Psoas muscle (tissue), 8 donors: ENCODE measurements at regions of chr3 and their contacts with region 1.

Region 1: GRCh38 chr3:157030712-157031111 is 129.2 kb downstream of the CCNL1 start:
- DNase-seq: no peak
- ATAC-seq: no peak
- H3K4me3 ChIP-seq: no peak overlapping the region
- H3K27ac ChIP-seq: no peak overlapping the region
- H3K4me1 ChIP-seq: no peaks in the 10 kb centered on the region
- H3K27me3 ChIP-seq: no peaks in the 10 kb centered on the region
- CTCF ChIP-seq: no peak

Region 2: DNA sequence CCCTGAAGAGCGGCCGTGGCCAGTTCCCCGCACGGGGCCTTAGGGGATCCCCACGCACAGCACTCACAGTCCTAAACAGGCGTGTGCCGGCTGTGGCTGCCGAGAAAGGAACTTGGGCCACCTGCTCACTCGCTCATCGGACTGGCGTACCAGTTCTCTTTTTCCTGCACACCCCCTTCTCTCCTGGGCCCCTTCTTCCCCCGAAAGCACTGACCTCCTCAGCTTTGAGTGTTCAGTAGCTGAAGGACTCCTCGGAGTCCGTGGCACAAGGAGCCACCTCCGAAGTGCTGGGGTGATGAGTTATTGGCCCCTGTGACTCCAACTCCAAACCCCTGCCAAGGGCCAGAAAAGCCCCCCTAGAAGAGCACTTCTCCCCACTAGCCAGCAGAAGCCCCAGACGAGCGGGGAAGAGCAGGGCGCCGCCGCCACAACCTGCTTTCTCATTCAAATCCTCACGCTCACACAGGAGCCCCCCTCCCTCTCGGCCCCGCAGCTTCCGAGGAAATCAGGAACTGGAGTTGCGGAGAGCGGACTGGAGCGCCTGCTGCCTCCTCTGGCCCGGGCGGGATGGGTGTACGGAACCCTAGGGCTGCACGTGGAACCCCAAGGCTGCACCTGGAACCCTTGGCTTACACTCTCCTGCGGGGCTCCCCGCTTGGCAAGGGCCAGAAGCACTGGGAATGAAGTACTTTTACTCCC is 1285.9 kb before region 1 on chr3 and contains the start of gene PLCH1:
- intact Hi-C with region 1: loop called in 1 of 2 experiments (anchors 10 kb)
- DNase-seq: peak; percentile 51 to 70
- ATAC-seq: peak; percentile 56 to 86 (median 80)
- H3K4me3 ChIP-seq: peak within 1 kb of the TSS; percentile 80
- H3K27ac ChIP-seq: no peak within 1 kb of the TSS
- H3K4me1 ChIP-seq: peaks cover 6% of the 10 kb centered on the region
- H3K27me3 ChIP-seq: peaks cover 3 to 37% (median 3%) of the 10 kb centered on the region in 3 donors
- CTCF ChIP-seq: no peak
- total RNA-seq, gene PLCH1: 0.05 to 1.1 (median 0.62) TPM in 3 of 4 donors, not detected in the other

Region 3: DNA sequence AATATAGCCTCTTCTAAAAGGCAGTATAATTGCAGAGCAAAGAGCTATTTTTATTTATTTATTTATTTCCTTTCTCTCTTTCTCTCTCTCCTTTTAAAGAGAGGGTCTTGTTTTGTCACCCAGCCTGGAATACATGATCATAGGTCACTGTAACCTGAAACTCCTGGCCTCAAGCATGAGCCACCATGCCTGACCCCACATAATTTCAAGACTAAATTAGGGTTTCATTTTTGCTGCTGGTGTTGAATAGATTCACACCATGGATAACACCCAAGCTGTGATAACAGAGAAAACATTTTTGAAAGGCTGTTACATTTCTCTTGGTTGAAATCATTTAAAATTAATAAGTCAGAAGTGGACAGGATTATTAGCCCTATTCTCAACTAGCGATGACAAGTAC is 73.0 kb before region 1 on chr3:
- intact Hi-C with region 1: no loop called
- DNase-seq: no peak
- ATAC-seq: no peak
- H3K4me3 ChIP-seq: no peak overlapping the region
- H3K27ac ChIP-seq: no peak overlapping the region
- H3K4me1 ChIP-seq: no peaks in the 10 kb centered on the region
- H3K27me3 ChIP-seq: no peaks in the 10 kb centered on the region
- CTCF ChIP-seq: no peak

Region 4: GRCh38 chr3:157077565-157077991 is 46.9 kb after region 1 on chr3:
- intact Hi-C with region 1: no loop called
- DNase-seq: peak in 1 of 2 donors; percentile 56
- ATAC-seq: no peak
- H3K4me3 ChIP-seq: no peak overlapping the region
- H3K27ac ChIP-seq: peak overlapping the region; percentile 30
- H3K4me1 ChIP-seq: peaks cover 7% of the 10 kb centered on the region
- H3K27me3 ChIP-seq: no peaks in the 10 kb centered on the region
- CTCF ChIP-seq: no peak

Region 5: GRCh38 chr3:157136647-157137387 is 106.1 kb after region 1 on chr3:
- intact Hi-C with region 1: no loop called
- DNase-seq: peak; percentile 25 to 63
- ATAC-seq: peak; percentile 54 to 79 (median 70)
- H3K4me3 ChIP-seq: peak overlapping the region; percentile 43
- H3K27ac ChIP-seq: peak overlapping the region; percentile 71
- H3K4me1 ChIP-seq: peaks cover 37% of the 10 kb centered on the region
- H3K27me3 ChIP-seq: no peaks in the 10 kb centered on the region
- CTCF ChIP-seq: no peak

Region 6: GRCh38 chr3:157317895-157318294 is 287.2 kb after region 1 on chr3:
- intact Hi-C with region 1: no loop called
- DNase-seq: no peak
- ATAC-seq: no peak
- H3K4me3 ChIP-seq: no peak overlapping the region
- H3K27ac ChIP-seq: no peak overlapping the region
- H3K4me1 ChIP-seq: no peaks in the 10 kb centered on the region
- H3K27me3 ChIP-seq: no peaks in the 10 kb centered on the region
- CTCF ChIP-seq: no peak